AG04449 (cell line): ENCODE measurements at regions of chr20 and their contacts with region 1.

Region 1: DNA sequence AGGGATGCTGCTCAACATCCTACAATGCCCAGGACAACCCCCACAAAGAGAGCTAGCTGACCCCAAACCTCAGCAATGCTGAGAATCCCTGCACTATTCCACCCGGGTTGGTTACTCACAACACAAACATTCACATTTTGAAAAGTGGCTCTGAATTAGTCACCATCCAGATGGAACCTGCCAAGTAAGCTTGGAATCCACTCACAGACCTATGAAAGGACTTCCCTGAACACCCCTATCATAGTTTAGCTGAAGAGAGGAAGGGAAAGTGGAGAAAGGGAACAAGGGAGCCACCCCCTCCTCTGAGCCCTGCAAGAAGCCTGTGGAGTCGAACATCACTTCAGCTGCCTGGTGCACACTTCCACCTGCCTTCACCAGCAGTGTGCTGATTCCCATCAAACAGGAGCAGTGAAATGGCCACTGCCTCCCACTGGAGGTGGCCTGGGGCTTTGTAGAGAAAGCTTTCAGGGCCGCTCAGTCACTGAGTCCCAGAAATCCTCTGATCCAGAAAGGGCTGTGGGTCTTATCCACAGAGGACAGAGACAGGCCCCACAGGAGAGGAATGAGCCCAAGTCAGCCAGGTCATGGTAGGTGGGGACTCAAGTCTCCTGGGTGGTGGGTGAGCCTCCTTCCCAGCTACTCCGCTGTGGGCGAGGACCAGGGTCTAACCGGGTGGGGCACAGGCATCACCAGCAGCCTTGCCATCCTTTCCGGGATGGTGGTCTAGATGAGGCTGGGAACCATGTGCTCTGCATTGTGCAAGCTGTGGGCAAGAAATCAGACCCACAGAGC is 203.7 kb downstream of the SYNDIG1 start:
- DNase-seq: peak; percentile 90
- H3K4me3 ChIP-seq: no peak overlapping the region
- CTCF ChIP-seq: no peak

Region 2: GRCh38 chr20:24634855-24635254 is 38.2 kb before region 1 on chr20:
- CTCF ChIA-PET with region 1: no interaction called
- POLR2A ChIA-PET with region 1: no interaction called
- DNase-seq: peak; percentile 82
- H3K4me3 ChIP-seq: 0 out of 2 replicates have a peak overlapping the region, but pooled peaks have one; percentile 8
- CTCF ChIP-seq: no peak

Region 3: DNA sequence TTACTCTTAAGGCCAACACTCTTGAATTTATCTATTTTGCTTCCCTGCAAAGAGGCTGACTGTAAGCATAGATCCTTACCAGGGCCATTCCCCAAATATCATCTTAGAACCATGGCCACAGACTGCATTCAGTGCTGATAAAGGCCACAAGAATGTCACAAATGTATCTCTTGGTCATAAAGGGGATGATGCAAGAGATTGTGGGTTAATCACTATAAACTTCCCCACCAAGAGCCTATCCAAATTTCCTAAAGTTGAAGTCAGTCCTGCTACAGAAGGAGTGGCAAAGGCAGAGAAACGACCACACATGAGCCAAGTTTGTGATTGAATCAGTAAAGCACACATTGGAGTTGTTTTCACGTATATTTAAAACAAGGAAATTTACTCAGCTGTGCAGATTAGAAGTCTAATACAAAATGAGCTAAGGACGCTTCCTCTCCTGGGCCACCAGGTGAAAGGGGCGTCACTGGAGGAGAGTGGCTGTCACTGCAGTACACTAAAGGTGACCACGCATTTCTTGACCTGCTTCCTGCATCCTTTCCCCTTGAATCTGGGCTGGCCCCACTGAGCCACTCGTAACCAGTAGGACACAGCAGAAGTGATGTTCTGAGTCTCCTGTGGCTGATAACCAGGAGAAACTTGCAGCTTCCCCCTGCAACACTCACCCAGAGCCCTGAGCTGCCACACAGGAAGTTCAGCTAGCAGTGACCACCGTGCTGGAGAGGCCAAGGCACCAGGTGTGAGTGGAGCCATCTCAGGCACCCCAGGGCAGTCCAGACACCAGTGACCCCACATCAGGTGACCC is 21.7 kb before region 1 on chr20:
- CTCF ChIA-PET with region 1: interaction called, 4 read pairs
- POLR2A ChIA-PET with region 1: interaction called, 12 read pairs
- DNase-seq: peak; percentile 92
- H3K4me3 ChIP-seq: no peak overlapping the region
- CTCF ChIP-seq: no peak

Region 4: GRCh38 chr20:24692446-24693200 is 19.5 kb after region 1 on chr20:
- CTCF ChIA-PET with region 1: no interaction called
- POLR2A ChIA-PET with region 1: no interaction called
- DNase-seq: no peak
- H3K4me3 ChIP-seq: no peak overlapping the region
- CTCF ChIP-seq: no peak

Region 5: GRCh38 chr20:25057234-25058050 is 384.4 kb after region 1 on chr20:
- CTCF ChIA-PET with region 1: no interaction called
- POLR2A ChIA-PET with region 1: no interaction called
- DNase-seq: no peak
- H3K4me3 ChIP-seq: peak overlapping the region; percentile 65
- CTCF ChIP-seq: no peak